Natural killer cell (primary cell): ENCODE measurements at regions of chr4 and their contacts with region 1.

Region 1: GRCh38 chr4:674172-675035 is at the starts of genes ATP5ME and MYL5:
- DNase-seq: peak; percentile 99
- ATAC-seq: peak; percentile 90 to 97 (median 92)
- H3K4me3 ChIP-seq: peak within 1 kb of the TSS; percentile 61
- H3K4me3 Mint-ChIP-seq: peak within 1 kb of the TSS; percentile 88
- H3K27ac ChIP-seq: peak within 1 kb of the TSS; percentile 92
- H3K27ac Mint-ChIP-seq: peak within 1 kb of the TSS; percentile 81 to 92
- H3K4me1 ChIP-seq: peaks cover 36% of the 10 kb centered on the region
- H3K4me1 Mint-ChIP-seq: peaks cover 7 to 14% of the 10 kb centered on the region in 2 donors
- H3K27me3 ChIP-seq: no peaks in the 10 kb centered on the region
- H3K27me3 Mint-ChIP-seq: no peaks in the 10 kb centered on the region
- CTCF ChIP-seq: peak; percentile 84
- total RNA-seq, gene ATP5ME: 114 to 140 (median 136) TPM
- total RNA-seq, gene MYL5: 23.4 to 39.5 (median 30.1) TPM

Region 2: DNA sequence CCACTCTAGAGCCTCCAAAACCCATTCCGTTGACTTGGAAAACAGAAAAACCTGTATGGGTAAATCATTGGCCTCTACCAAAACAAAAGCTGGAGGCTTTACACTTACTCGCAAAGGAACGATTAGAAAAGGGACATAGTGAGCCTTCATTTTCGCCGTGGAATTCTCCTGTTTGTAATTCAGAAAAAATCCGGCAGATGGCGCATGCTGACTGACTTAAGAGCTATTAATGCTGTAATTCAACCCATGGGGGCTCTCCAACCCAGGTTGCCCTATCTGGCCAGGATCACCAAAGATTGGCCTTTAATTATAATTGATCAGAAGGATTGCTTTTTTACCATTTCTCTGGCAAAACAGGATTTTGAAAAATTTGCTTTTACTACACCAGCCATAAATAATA is 429.9 kb before region 1 on chr4:
- intact Hi-C with region 1: loop called (anchors 1 kb)
- DNase-seq: peak in 1 of 2 donors; percentile 79
- ATAC-seq: peak in 1 of 3 donors; percentile 36
- H3K4me3 ChIP-seq: no peak overlapping the region
- H3K4me3 Mint-ChIP-seq: no peak overlapping the region
- H3K27ac ChIP-seq: no peak overlapping the region
- H3K27ac Mint-ChIP-seq: no peak overlapping the region
- H3K4me1 ChIP-seq: peaks cover 9% of the 10 kb centered on the region
- H3K4me1 Mint-ChIP-seq: peaks cover 15% of the 10 kb centered on the region in 2 donors
- H3K27me3 ChIP-seq: no peaks in the 10 kb centered on the region
- H3K27me3 Mint-ChIP-seq: no peaks in the 10 kb centered on the region
- CTCF ChIP-seq: peak; percentile 76

Region 3: DNA sequence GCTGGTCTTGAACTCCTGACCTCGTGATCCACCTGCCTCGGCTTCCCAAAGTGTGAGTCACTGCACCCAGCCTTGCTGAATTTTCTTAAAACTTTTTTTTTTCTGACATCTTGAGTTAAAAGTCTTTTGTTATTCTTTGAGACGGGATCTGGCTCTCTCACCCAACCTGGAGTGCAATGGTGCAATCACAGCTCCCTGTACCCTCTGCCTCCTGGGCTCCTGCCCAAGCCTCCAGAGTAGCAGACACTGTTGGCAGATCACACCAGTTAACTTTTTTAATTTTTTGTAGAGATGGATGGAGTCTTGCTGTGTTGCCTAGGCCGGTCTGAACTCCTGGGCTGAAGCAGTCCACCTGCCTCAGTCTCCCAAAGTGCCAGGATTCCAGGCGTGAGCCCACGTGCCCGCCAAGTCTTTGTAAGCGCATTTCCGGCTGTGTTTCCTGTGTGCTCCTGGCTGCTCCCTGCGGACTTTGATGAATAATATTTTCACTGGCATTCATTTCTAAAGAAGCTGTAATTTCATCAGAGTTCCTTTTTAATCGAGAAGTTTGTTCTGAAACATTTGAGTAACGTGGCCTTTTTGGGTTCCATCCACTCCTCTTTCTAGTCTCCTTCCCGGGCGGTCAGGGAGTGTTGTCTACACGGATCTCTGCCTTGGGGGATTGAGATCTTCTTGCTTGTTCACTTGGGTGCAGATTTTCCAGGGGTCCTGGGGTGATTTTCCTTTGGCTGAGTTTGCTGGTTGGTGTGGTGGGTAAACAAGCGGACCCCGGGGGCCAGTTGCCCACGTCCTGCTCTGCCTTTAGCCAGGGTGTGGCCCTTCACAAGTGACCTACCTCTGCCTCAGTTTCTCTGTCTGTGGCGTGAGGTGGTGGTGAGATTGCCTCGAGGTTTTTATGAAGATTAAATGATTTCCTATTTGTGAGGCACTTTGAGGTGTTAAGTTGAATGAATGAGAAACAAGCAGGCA is 75.6 kb after region 1 on chr4:
- intact Hi-C with region 1: no loop called
- DNase-seq: no peak
- ATAC-seq: no peak
- H3K4me3 ChIP-seq: no peak overlapping the region
- H3K4me3 Mint-ChIP-seq: no peak overlapping the region
- H3K27ac ChIP-seq: no peak overlapping the region
- H3K27ac Mint-ChIP-seq: no peak overlapping the region
- H3K4me1 ChIP-seq: no peaks in the 10 kb centered on the region
- H3K4me1 Mint-ChIP-seq: peaks cover 11 to 12% of the 10 kb centered on the region in 2 donors
- H3K27me3 ChIP-seq: no peaks in the 10 kb centered on the region
- H3K27me3 Mint-ChIP-seq: no peaks in the 10 kb centered on the region
- CTCF ChIP-seq: no peak